Esophagus muscularis mucosa (tissue), 4 donors: ENCODE measurements at regions of chr5 and their contacts with region 1.

Region 1: DNA sequence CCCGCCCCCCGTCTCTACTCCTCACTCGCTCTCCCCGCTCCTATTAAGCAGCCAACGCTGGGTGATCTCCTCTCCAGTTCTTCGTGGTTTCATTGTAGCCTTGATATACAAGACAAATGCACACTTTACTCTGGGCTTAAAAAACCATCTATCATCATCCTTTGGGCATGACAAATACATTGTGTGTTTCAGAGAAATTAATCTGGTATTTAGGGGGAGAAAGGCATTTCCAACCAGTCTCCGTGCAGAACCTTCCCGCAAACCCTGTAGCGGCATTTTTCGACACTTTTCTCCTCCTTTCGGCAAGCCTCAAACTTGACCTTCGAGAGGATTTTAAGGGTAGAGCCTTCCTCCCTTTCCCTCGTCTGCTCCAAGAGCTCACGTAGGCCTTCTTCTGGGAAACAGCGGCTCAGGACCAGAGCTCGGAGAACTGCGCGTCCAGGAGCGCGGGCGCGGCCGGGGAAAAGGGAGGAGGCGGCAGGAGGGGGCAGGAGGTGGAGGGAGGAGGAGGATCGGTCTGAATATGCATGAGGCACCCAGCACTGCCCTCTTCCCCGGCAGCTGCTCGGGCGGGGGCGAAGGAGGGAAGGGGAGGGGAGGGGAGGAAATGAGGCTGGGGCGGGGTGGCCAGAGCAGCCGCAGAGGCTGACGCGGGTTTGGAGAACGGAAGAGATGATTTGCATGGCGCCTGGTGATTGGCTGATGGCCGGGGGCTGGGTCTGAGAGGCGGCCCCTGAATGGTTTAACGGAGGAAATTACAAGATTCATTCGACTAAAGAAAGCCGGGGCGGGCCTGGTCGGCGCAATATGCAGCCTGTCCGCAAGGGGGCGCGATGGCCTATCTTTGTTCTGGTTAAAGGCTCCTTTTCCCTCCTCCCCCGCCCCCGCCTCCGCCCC is 127.5 kb downstream of the TMEM161B start:
- DNase-seq: peak; percentile 99
- H3K4me3 ChIP-seq: peak overlapping the region; percentile 50 to 66 (median 58)
- H3K27ac ChIP-seq: peak overlapping the region in 3 of 4 donors; percentile 47 to 61 (median 54)
- H3K4me1 ChIP-seq: peaks cover 31 to 60% (median 54%) of the 10 kb centered on the region in 4 donors
- H3K27me3 ChIP-seq: peaks cover 0 to 83% (median 13%) of the 10 kb centered on the region in 4 donors
- CTCF ChIP-seq: peak; percentile 54 to 86 (median 73)
- EP300 ChIP-seq: no peak
- POLR2A ChIP-seq: no peak

Region 2: DNA sequence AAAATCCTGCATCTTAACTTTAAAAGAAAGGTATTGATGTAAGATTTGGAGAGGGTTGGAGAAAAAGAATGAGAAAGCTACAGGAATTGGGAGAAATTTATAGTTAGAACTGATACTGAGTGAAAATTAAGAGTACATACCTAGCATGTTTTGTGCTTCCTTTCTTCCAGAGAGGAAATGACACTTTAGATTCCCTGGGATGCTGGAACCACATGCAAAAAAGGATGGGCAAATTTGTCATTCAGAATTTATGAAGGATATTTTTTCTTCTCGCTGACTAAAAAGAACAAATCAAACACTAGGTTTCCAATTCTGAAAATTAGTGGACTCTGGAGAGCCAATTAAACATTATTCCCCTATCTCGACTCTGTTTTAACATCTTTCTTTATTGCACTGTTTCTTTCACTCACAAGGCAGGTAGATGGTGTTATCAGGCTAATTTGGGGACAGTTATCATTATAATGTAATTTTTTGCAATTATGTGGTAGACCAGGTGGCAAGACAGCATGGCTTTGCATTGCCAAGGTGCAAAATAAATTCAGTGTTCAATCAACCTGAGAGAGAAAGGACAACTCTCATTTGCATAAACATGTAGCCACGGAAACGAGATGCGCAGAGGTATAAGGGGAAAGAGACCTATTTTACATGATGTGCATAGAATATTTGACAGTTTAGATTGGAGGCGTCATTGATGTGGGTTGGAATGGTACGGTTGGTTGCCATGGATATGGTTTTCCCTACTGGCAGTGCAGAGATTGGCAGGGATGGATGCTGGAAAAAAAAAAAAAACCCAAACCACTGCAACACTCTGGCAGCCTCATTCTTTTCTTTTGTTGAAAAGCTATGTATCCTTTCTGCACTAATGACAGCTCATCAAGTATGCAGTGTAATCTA is 408.0 kb before region 1 on chr5:
- intact Hi-C with region 1: no loop called
- DNase-seq: no peak
- H3K4me3 ChIP-seq: no peak overlapping the region
- H3K27ac ChIP-seq: no peak overlapping the region
- H3K4me1 ChIP-seq: no peaks in the 10 kb centered on the region
- H3K27me3 ChIP-seq: no peaks in the 10 kb centered on the region
- CTCF ChIP-seq: no peak
- EP300 ChIP-seq: no peak
- POLR2A ChIP-seq: no peak

Region 3: DNA sequence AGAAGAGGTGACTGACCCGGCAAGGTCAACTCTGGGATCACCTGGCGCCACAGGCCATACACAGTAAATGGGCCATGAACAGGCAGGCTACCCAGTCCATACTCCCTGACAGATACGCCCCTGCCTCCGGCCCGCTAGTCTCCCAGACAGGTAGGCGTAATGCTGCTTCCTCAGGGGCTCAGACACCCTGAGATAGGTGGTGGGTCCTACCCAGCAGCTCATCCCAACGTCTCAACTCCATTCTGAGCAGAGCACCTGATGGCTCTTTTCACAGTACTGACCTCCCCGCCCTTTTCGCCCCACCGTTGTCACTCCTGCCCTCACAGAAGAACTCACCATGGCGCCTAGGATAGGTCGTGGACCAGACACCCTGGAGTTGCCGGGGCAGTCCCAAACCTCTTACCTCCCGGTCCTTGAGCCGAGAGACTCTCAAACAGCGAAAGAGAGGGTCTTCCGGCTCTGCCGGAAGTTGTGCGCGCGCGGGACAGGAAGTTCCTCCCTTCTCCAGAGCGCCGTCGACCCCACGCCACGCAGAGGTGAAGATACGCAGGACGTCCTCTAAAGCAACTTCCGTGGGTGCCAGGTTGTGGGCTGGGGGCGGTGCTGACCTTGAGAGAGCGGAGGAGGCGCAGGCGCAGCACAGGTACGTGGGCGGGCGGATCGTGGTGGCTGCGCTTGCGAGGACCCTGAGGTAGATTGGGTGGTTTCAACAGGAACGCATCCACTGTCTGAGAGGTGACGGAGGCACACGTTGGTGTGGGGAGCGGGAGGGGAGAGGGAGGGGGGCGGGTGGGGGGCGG is 127.5 kb after region 1 on chr5 and contains the start of gene TMEM161B:
- intact Hi-C with region 1: loop called (anchors 5 kb)
- DNase-seq: peak; percentile 95
- H3K4me3 ChIP-seq: peak within 1 kb of the TSS; percentile 68 to 88 (median 76)
- H3K27ac ChIP-seq: peak within 1 kb of the TSS; percentile 64 to 75 (median 74)
- H3K4me1 ChIP-seq: peaks cover 28 to 39% (median 29%) of the 10 kb centered on the region in 4 donors
- H3K27me3 ChIP-seq: no peaks in the 10 kb centered on the region
- CTCF ChIP-seq: peak in 1 of 3 experiments; percentile 21
- EP300 ChIP-seq: no peak
- POLR2A ChIP-seq: no peak
- total RNA-seq, gene TMEM161B: 7.6 to 16.2 (median 10.1) TPM

Region 4: DNA sequence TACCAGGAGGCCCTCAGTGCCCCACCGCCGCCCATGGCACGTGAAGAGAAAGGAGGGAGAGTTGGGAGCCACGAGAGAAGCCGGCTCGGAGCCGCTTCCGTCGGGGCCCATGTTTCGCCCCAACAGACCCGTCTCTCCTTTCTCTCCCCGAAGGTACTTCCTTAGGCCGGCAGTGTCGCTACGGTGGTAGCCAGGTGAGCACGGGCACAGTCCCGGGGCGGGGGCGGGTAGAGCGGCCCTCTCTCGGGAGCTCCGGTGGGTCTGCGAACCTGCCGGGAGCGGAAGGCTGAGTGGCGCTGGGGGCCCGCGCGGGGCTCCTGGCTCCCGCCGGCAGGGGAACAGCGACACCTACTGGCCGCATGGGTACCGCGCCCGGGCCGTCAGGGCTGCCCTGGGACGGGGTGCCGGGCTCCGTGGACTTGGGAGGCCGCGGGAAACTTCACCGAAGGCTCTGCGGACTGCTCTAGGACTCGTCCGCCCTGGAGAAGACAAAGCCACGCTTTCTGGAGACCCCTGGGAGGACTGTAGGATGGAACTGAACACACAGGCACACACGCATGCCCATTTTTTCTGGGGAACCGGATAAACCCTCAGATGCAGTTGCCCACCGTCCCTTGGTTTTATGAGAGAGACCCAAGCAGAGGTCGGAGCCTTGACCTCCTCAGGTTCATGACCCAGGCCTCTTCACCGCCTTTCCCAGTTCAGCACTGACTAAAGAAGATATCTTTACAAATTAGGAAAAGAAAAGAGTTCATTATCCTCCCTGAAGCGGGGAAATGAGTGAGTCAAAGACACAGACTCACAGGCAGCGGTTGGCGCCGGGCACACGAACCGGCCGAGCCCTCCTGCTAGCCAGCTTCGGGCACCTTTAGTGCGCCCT is 539.4 kb after region 1 on chr5:
- intact Hi-C with region 1: loop called (anchors 5 kb)
- DNase-seq: no peak
- H3K4me3 ChIP-seq: peak overlapping the region; percentile 46 to 60 (median 51)
- H3K27ac ChIP-seq: no peak overlapping the region
- H3K4me1 ChIP-seq: peaks cover 18 to 47% (median 40%) of the 10 kb centered on the region in 4 donors
- H3K27me3 ChIP-seq: peaks cover 7 to 100% (median 88%) of the 10 kb centered on the region in 4 donors
- CTCF ChIP-seq: peak; percentile 70 to 98 (median 86)
- EP300 ChIP-seq: no peak
- POLR2A ChIP-seq: no peak